ENCODE measurements at regions of chr18 and their contacts with region 1.

Region 1: GRCh38 chr18:47100214-47100831 is 50.0 kb downstream of the HDHD2 start:
- DNase-seq: peak in 1 of 2 donors; percentile 22
- H3K4me3 ChIP-seq: no peak overlapping the region
- H3K27ac ChIP-seq: no peak overlapping the region
- H3K4me1 ChIP-seq: no peaks in the 10 kb centered on the region
- H3K27me3 ChIP-seq: no peaks in the 10 kb centered on the region
- CTCF ChIP-seq: peak; percentile 65 to 73

Region 2: GRCh38 chr18:47036298-47036874 is 63.9 kb before region 1 on chr18:
- intact Hi-C with region 1: no loop called
- DNase-seq: no peak
- H3K4me3 ChIP-seq: no peak overlapping the region
- H3K27ac ChIP-seq: no peak overlapping the region
- H3K4me1 ChIP-seq: no peaks in the 10 kb centered on the region
- H3K27me3 ChIP-seq: no peaks in the 10 kb centered on the region
- CTCF ChIP-seq: no peak

Region 3: DNA sequence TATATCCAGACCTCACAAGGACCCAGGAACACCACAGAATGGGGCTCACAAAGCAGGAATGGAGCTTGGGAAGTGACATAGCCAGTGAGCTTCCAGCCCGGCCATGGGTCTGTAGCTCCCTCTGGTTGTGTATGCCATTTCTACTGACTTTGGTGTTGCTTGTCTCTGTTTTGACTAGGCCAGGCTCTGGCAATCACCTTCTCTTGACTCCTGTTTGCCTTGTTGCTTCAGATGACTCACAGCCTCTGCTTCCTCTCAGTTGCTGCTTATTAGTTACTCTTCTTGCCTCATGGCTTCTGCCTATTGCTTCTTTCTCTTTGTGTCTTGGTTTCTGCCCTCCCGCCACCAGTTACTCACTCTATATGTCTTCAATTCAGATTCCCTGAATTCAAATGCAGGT is 91.6 kb after region 1 on chr18:
- intact Hi-C with region 1: no loop called
- DNase-seq: no peak
- H3K4me3 ChIP-seq: no peak overlapping the region
- H3K27ac ChIP-seq: no peak overlapping the region
- H3K4me1 ChIP-seq: no peaks in the 10 kb centered on the region
- H3K27me3 ChIP-seq: peaks cover 0 to 3% of the 10 kb centered on the region in 2 donors
- CTCF ChIP-seq: no peak

Region 4: DNA sequence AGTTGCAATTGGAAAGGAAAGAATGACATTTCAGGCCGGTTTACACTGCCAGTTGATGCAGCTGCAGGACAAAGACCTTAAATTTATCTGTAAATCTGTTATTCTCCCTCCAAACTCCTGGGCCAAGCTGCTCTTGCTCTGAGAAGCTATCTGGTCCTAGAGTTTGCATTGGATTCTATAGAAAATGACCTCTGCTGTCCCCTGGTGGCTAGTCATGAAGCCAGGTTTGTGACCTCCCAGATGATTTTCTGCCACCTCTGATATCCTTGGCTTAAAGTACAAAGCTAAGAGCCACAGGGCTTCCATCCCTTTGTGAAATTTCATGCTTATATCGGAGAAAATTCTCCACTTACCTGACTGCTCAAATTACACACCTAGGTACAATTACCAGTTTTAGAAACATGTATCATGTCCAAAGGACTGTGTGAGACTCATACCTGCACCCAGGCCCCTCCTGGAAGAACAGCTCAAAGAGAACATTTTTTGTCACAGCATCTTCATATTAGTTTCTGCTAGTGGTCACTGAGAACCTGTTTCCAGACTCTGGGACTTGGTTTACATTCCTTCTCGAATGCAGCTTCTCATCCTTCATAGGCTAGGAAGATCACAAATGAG is 104.7 kb after region 1 on chr18:
- intact Hi-C with region 1: loop called (anchors 10 kb)
- DNase-seq: no peak
- H3K4me3 ChIP-seq: no peak overlapping the region
- H3K27ac ChIP-seq: no peak overlapping the region
- H3K4me1 ChIP-seq: no peaks in the 10 kb centered on the region
- H3K27me3 ChIP-seq: no peaks in the 10 kb centered on the region
- CTCF ChIP-seq: peak; percentile 56 to 62

Region 5: DNA sequence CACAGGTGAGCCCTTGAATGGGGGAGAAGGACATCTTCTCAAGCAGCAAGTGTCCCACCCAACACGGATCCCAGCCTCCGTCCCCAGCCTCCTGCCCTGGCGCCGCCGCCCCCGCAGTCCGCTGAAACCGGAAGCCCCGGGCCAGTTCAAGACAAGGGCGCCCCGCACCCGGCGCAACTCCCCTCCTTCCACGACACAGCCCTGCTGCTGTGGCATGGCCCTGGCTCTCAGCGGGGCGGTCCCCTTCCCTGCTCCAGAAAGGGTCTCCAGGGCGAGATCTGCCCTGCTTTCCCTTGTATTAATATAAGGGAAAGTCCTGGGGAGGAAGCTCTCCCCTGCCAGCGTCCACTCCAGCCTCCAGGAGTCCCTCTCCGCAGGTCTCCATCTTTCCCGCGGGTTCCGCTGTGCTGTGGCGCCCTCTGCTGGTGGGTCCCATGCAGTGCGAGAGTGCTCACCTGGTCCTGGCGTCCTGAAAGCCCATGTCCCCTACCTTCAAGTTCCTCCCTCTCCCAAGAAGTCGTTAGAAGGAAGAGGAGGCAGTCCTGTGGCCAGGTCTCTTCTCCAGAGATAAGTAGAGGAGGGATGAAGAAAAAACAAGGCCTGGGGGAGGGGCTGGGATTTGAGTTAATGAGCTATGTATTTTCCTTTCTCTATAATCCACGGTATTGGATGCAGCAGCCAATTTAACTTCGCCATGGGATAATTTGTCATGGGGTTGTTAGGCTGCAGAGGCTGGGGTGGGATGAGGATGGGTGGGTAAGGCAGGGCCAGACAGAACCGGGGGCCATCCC is 654.2 kb after region 1 on chr18:
- intact Hi-C with region 1: loop called (anchors 5 kb)
- DNase-seq: no peak
- H3K4me3 ChIP-seq: no peak overlapping the region
- H3K27ac ChIP-seq: no peak overlapping the region
- H3K4me1 ChIP-seq: no peaks in the 10 kb centered on the region
- H3K27me3 ChIP-seq: peaks cover 0 to 16% of the 10 kb centered on the region in 2 donors
- CTCF ChIP-seq: peak in 1 of 2 experiments; percentile 31